Psoas muscle (tissue), 8 donors: ENCODE measurements at regions of chr1 and their contacts with region 1.

Region 1: GRCh38 chr1:54199765-54200518 is at the starts of genes CYB5RL and MRPL37:
- DNase-seq: peak; percentile 88 to 93
- ATAC-seq: peak; percentile 96 to 100 (median 99)
- H3K4me3 ChIP-seq: peak within 1 kb of the TSS; percentile 79
- H3K27ac ChIP-seq: peak within 1 kb of the TSS; percentile 80
- H3K4me1 ChIP-seq: peaks cover 20% of the 10 kb centered on the region
- H3K27me3 ChIP-seq: no peaks in the 10 kb centered on the region
- CTCF ChIP-seq: no peak
- total RNA-seq, gene CYB5RL: 2.8 to 6.4 (median 3.3) TPM
- total RNA-seq, gene MRPL37: 89.6 to 109 (median 102) TPM

Region 2: DNA sequence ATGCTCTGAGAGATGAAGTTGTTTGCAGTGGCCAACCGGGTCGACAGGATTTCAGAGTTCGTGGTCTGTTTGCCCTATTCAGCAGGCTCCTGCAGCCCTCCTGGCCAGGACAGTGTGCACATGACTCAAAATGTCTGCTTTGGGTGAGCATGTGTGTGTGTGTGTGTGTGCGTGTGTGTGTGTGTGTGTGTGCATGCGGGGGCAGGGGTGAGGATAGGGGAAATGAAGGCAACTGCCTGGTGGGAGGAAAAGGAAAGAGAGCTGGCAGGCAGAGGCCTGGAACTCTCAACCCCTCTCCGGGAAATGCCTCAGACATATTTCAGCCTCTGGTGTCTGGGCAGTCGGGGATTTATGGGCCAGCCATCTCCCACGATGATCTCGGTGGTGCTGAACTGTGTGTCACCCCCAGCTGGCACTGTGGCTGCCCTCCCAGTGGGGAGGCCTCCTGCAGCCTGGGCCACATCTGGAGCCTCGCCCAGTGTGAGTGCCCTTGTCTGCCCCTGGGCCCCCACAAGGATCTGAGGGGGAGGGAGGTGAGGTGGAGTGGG is 62.4 kb before region 1 on chr1:
- intact Hi-C with region 1: no loop called
- DNase-seq: no peak
- ATAC-seq: peak in 1 of 4 donors; percentile 41
- H3K4me3 ChIP-seq: no peak overlapping the region
- H3K27ac ChIP-seq: no peak overlapping the region
- H3K4me1 ChIP-seq: no peaks in the 10 kb centered on the region
- H3K27me3 ChIP-seq: no peaks in the 10 kb centered on the region
- CTCF ChIP-seq: no peak

Region 3: GRCh38 chr1:54376430-54377039 is 176.6 kb after region 1 on chr1:
- intact Hi-C with region 1: no loop called
- DNase-seq: no peak
- ATAC-seq: peak in 3 of 4 donors; percentile 35 to 58 (median 49)
- H3K4me3 ChIP-seq: no peak overlapping the region
- H3K27ac ChIP-seq: peak overlapping the region; percentile 46
- H3K4me1 ChIP-seq: peaks cover 98% of the 10 kb centered on the region
- H3K27me3 ChIP-seq: no peaks in the 10 kb centered on the region
- CTCF ChIP-seq: no peak

Region 4: GRCh38 chr1:54480525-54480848 is 280.5 kb after region 1 on chr1:
- intact Hi-C with region 1: loop called in 1 of 2 experiments (anchors 5 kb)
- DNase-seq: no peak
- ATAC-seq: no peak
- H3K4me3 ChIP-seq: no peak overlapping the region
- H3K27ac ChIP-seq: no peak overlapping the region
- H3K4me1 ChIP-seq: peaks cover 21% of the 10 kb centered on the region
- H3K27me3 ChIP-seq: peaks cover 0 to 2% (median 0%) of the 10 kb centered on the region in 3 donors
- CTCF ChIP-seq: no peak